ENCODE measurements at regions of chr2 and their contacts with region 1.

Region 1: DNA sequence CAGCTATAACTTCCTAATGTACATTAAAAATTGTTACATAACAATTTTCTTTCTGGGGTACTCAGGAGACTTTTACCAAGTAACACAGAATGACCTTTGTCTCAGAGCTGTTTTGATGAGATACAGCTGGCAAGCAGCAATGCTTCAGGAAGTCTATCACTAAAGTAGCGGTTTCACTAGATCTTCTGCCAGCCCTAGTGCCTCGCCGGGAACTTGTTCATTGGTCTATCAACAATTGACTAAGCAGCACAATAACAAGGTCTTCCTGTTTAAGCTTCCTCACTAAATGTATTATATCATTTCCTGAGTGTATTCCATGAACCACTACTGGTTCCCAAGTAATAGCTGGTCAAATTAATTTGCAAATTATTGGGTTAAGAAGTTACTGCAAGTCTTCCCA is 69.2 kb downstream of the TRIP12 start:
- DNase-seq: peak; percentile 65
- H3K4me3 Mint-ChIP-seq: no peak overlapping the region
- H3K27ac Mint-ChIP-seq: peak overlapping the region; percentile 61
- H3K4me1 Mint-ChIP-seq: peaks cover 64% of the 10 kb centered on the region
- H3K27me3 Mint-ChIP-seq: no peaks in the 10 kb centered on the region

Region 2: DNA sequence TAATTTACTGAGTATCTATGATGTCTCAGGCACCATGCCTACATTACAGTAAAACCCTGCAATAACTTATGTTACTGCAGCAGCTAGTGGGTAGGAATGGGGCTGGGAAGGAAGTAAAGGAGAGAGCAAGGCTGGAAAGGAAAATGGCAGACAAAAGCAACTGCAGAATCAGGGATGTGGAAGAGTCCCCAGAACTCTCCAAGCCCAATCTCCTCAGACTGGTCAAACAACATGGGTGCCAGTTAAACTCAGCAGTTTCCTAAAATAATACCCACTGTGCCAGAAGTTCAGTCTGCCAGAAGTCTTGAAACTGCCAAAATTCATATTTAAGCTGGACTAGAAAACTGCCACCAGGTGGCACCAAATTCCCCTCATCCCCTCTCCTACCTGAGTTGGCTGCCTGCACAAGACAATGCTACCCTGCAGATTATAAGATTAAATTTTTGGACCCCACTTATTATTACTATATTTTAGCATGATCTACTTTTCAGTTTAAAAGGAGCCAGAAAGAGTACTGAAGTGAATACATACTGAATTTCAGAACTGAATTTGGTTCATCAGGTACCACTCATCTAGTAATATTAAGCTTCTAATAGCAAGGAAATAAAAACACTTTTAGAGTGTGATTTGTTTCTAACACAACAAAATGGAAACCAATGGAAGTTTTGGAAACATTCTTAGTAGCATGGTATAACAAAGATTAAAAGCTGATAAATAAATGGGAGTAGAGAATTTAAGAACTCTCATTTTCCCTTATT is 51.4 kb before region 1 on chr2:
- CTCF ChIA-PET with region 1: interaction called, 14 read pairs
- POLR2A ChIA-PET with region 1: no interaction called
- intact Hi-C with region 1: loop called (anchors 1 kb)
- DNase-seq: peak; percentile 79
- H3K4me3 Mint-ChIP-seq: no peak overlapping the region
- H3K27ac Mint-ChIP-seq: no peak overlapping the region
- H3K4me1 Mint-ChIP-seq: no peaks in the 10 kb centered on the region
- H3K27me3 Mint-ChIP-seq: no peaks in the 10 kb centered on the region

Region 3: DNA sequence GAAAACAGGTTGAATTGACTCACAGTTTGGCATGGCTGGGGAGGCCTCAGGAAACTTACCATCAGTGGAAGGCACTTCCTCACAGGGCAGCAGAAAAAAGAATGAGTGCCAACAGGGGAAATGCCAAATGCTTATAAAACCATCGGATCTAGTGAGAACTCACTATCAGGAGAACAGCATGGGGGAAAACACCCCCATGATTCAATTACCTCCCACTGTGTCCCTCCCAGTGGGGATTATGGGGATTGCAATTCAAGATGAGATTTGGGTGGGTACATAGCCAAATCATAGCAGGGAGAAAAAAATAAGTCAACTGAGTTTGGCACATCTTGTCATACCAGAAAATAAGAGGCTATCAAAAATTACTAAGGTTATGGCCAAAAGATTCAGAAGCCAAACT is 27.1 kb before region 1 on chr2:
- CTCF ChIA-PET with region 1: no interaction called
- POLR2A ChIA-PET with region 1: no interaction called
- intact Hi-C with region 1: loop called (anchors 1 kb)
- DNase-seq: no peak
- H3K4me3 Mint-ChIP-seq: no peak overlapping the region
- H3K27ac Mint-ChIP-seq: no peak overlapping the region
- H3K4me1 Mint-ChIP-seq: peaks cover 22% of the 10 kb centered on the region
- H3K27me3 Mint-ChIP-seq: no peaks in the 10 kb centered on the region

Region 4: DNA sequence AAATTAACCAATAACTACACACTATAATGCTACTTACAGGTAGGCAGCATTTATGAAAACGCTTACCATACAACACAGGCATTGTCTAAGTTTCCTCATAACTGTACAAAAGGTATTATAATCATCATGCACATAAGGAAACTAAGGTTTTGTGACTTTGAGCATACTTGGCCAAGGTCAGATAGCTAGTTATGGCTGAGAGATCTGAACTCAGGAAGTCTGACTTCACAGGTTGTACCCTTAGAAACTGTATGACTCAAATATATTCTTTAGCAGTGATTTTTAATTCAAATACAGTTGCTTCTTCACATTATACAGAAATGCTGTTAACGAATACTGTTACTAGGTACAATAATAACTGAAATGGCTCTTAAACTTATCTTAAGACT is 20.1 kb before region 1 on chr2:
- CTCF ChIA-PET with region 1: no interaction called
- POLR2A ChIA-PET with region 1: interaction called, 6 read pairs
- intact Hi-C with region 1: loop called (anchors 2 kb)
- DNase-seq: no peak
- H3K4me3 Mint-ChIP-seq: no peak overlapping the region
- H3K27ac Mint-ChIP-seq: no peak overlapping the region
- H3K4me1 Mint-ChIP-seq: peaks cover 47% of the 10 kb centered on the region
- H3K27me3 Mint-ChIP-seq: no peaks in the 10 kb centered on the region

Region 5: GRCh38 chr2:229869226-229869625 is 16.7 kb after region 1 on chr2:
- CTCF ChIA-PET with region 1: no interaction called
- POLR2A ChIA-PET with region 1: no interaction called
- intact Hi-C with region 1: loop called (anchors 2 kb)
- DNase-seq: no peak
- H3K4me3 Mint-ChIP-seq: no peak overlapping the region
- H3K27ac Mint-ChIP-seq: no peak overlapping the region
- H3K4me1 Mint-ChIP-seq: peaks cover 54% of the 10 kb centered on the region
- H3K27me3 Mint-ChIP-seq: no peaks in the 10 kb centered on the region

Region 6: DNA sequence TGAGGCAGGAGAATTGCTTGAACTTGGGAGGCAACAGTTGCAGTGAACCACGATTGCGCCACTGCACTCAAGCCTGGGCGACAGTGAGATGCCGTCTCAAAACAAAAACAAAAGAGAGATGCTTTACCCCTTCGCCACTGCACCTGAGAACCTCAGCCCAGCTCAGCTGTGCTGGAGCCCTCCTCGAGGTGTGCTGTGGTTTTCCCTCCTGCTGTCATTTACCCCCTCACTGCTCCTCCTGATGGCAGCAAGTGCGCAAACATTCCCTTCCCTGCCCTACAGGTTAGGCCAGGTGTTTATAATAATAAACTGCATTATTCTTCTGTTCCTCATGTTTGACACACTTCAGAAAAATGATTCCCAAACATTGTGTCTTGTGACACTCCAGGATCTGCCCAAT is 78.1 kb after region 1 on chr2:
- CTCF ChIA-PET with region 1: no interaction called
- POLR2A ChIA-PET with region 1: no interaction called
- intact Hi-C with region 1: no loop called
- DNase-seq: no peak
- H3K4me3 Mint-ChIP-seq: no peak overlapping the region
- H3K27ac Mint-ChIP-seq: no peak overlapping the region
- H3K4me1 Mint-ChIP-seq: peaks cover 10% of the 10 kb centered on the region
- H3K27me3 Mint-ChIP-seq: no peaks in the 10 kb centered on the region